Mucosa of descending colon (tissue), 3 donors: ENCODE measurements at regions of chr16 and their contacts with region 1.

Region 1: DNA sequence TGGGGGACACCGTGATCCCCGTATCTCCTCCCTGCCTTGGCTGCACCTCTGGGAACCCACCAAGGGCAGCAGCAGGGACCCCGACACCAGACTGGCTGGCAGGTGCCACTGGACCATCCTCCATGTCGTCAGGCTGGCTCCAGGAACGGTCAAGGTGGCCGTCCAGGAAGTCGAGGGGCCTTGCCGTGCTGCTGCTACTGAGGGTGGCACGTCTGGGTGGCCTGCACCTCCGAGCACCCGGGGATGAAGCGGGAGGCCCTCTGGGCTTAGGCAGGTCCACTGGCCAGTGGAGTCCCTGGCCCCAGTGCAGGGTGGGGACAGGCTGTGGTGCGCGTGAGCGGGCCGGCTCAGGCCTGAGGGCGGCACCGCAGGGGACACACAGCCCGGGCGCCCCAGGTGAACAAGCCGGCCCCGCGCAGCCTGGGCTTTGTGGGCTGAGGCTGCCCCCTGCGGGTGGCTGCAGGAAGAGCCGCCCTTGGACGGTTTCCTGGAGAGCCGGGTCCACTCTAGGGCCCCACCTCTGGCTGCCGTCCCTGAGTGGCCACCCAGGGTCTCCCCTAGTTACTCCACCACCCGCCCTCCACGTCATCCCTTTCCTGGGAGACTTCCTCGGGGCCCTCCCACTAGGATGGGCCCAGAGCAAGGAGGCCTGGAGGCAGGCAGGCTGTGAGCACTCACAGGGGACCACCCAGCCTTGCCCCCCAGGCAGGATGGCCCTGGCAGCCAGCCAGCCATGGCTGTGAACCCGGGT is 42.8 kb upstream of the ZC3H18 start:
- DNase-seq: peak in 2 of 3 donors; percentile 78 to 84
- ATAC-seq: peak; percentile 79
- H3K4me3 ChIP-seq: no peak overlapping the region
- H3K4me1 ChIP-seq: peaks cover 26% of the 10 kb centered on the region
- CTCF ChIP-seq: peak; percentile 84

Region 2: DNA sequence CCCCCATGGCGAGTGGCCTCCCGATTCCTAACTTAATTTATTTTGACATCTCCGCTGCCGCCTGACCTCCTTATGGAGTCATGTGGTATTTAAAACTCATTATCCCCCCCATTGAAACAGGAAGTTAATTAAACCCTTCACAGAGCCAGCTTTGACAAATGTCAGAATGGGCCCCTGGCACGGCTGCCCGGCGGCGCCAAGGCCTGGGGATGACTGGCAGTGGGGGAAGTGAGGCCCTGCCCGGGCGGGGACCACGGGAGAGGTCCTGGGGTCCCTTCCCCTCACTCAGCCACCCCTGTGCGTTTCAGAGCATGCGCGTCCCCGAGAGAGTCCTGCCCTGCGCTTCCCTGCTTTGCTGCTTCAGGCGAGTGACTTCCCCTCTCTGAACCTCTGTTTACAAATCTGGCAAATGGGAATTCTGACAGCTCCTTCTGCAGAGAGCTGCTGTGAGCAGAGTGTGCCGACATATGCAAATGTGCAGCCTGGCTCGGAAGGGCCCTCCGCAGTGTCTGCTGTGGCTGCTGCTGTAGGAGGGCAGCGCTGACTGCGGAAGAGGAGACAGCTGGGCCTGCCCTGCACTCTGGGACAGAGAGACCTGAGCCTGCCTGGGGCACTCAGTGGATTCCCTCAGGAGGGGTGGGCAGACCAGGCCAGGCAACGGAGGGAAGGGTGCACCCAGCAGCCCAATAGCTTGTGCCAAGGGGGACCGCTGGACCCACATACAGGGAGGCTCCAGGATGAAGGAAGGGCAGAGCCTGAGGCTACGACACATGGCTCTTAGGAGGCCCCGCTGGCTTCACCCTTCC is 78.7 kb before region 1 on chr16:
- intact Hi-C with region 1: loop called (anchors 5 kb)
- DNase-seq: no peak
- ATAC-seq: no peak
- H3K4me3 ChIP-seq: no peak overlapping the region
- H3K4me1 ChIP-seq: peaks cover 11% of the 10 kb centered on the region
- CTCF ChIP-seq: no peak